Right ventricle myocardium inferior (tissue), 1 donor: ENCODE measurements at regions of chr10 and their contacts with region 1.

Region 1: DNA sequence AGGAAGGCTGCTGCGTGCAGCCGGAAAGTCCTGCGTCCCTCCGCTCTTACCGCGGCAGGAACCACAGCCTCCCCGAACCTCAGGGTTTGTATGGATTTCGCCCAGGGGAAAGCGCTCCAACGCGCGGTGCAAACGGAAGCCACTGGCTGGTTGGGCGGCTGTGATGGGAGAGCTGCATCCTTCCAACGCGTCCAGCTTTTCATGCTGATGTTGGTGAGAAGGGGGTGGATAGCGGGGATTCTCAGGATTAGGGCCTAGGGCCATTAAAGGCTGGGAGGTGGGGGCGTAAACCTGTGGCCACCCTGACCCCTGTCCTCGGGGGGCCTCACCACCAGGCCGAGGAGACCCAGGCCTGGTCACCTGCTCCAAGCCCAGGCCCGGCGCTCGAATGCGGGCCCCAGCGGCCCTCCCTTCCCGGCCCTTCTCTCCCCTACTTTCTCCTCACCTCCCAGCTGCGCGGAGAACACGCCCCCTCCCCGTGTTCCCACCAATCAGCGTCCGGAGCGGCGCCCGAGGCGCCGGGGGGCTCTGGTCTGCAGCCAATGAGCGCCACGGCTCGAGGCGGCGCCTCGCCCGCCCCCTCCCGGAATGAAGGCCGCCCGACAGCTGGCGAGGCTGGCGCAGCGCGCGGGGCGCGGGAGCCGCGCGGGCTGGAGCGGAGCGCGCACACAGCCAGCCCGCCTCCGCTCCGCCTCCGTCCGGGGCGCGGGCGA is 458 bp upstream of the NANOS1 start:
- DNase-seq: peak; percentile 93
- ATAC-seq: peak; percentile 82

Region 2: DNA sequence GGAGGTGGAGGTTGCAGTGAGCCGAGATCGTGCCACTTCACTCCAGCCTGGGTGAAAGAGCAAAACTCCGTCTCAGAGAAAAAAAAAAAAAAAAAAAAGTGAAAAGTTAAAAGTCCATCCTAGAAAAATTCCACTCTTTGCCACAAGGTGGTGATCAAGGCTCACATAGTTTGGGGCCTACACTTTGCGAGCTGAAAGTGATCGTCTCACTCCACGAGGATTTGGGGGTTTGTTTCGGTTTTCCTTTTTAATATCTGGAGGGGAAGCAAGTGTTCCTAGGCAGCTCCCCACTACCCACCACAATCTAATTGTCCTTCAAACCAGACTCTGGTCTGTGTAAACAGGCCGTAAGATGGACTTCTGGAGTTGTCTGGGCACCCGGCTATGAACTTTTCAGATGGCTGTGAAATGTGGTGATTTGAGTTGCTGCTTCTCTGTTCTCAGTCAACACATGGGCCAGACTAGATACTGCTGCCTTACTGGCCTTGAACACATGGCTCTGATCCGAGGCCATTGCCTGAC is 460.7 kb before region 1 on chr10:
- intact Hi-C with region 1: loop called (anchors 10 kb)
- DNase-seq: no peak
- ATAC-seq: peak; percentile 62

Region 3: GRCh38 chr10:118754720-118755480 is 274.2 kb before region 1 on chr10 and contains the start of gene CACUL1:
- intact Hi-C with region 1: loop called (anchors 5 kb)
- DNase-seq: peak; percentile 100
- ATAC-seq: peak; percentile 99
- total RNA-seq, gene CACUL1: 23.6 TPM

Region 4: GRCh38 chr10:118911361-118911760 is 117.7 kb before region 1 on chr10:
- intact Hi-C with region 1: loop called (anchors 5 kb)
- DNase-seq: no peak
- ATAC-seq: no peak

Region 5: GRCh38 chr10:118958984-118959916 is 69.8 kb before region 1 on chr10:
- intact Hi-C with region 1: loop called (anchors 5 kb)
- DNase-seq: peak; percentile 85
- ATAC-seq: peak; percentile 91

Region 6: GRCh38 chr10:119080521-119081260 is 51.6 kb after region 1 on chr10 and contains the start of gene EIF3A:
- intact Hi-C with region 1: loop called (anchors 5 kb)
- DNase-seq: peak; percentile 96
- ATAC-seq: peak; percentile 97
- total RNA-seq, gene EIF3A: 88.7 TPM